ENCODE measurements at regions of chr17 and their contacts with region 1.

Region 1: DNA sequence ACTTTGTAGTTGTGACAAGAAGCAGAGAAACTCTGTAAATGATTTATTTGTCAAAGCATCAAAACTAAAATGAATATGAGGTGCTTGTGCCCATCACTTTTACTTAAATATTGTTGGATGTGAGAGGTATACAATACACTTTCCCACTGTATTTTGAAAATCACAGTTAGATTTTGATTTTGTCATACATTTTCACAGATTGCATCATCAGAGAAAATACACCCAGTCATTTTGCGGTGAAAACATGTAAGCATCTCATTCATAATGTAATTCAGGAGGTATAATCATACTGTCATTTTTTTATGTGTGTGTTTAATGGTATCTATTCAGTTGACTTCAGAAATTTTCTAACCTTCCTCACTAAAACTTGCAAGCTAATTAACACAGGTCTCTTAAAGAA is 11.3 kb downstream of the ZNF207 start:
- DNase-seq: no peak
- ATAC-seq: no peak
- H3K4me3 ChIP-seq: no peak overlapping the region
- H3K27ac ChIP-seq: no peak overlapping the region
- H3K4me1 ChIP-seq: no peaks in the 10 kb centered on the region
- H3K27me3 ChIP-seq: no peaks in the 10 kb centered on the region
- CTCF ChIP-seq: no peak
- POLR2A ChIP-seq: no peak
- RAD21 ChIP-seq: no peak

Region 2: DNA sequence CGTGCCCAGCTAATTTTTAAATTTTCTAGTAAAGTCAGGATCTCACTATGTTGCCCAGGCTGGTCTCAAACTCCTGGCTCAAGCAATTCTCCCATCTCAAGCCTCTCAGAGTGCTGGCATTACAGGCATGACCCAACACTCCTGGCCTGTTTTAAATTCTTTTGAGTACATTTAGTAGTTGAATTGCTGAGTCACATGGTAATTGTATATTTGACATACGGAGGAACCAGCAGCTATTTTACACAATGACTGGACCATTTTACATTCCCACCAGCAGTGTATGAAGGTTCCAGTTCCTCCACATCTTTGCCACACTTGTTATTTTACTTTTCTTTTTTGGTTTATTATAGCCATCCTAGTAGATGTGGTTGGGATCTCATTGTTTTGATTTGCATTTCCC is 175.4 kb before region 1 on chr17:
- CTCF ChIA-PET with region 1: no interaction called
- POLR2A ChIA-PET with region 1: no interaction called
- dilution Hi-C with region 1: no loop called
- in situ Hi-C with region 1: no loop called
- intact Hi-C with region 1: no loop called
- DNase-seq: peak; percentile 55
- ATAC-seq: 0 out of 2 replicates have a peak, but pooled peaks have one; percentile 30
- H3K4me3 ChIP-seq: no peak overlapping the region
- H3K27ac ChIP-seq: no peak overlapping the region
- H3K4me1 ChIP-seq: peaks cover 8% of the 10 kb centered on the region
- H3K27me3 ChIP-seq: no peaks in the 10 kb centered on the region
- CTCF ChIP-seq: no peak
- POLR2A ChIP-seq: no peak
- RAD21 ChIP-seq: no peak

Region 3: GRCh38 chr17:32382526-32383223 is 21.4 kb after region 1 on chr17:
- CTCF ChIA-PET with region 1: no interaction called
- POLR2A ChIA-PET with region 1: no interaction called
- dilution Hi-C with region 1: no loop called
- in situ Hi-C with region 1: no loop called
- intact Hi-C with region 1: loop called (anchors 2 kb)
- DNase-seq: no peak
- ATAC-seq: no peak
- H3K4me3 ChIP-seq: no peak overlapping the region
- H3K27ac ChIP-seq: no peak overlapping the region
- H3K4me1 ChIP-seq: no peaks in the 10 kb centered on the region
- H3K27me3 ChIP-seq: no peaks in the 10 kb centered on the region
- CTCF ChIP-seq: no peak
- POLR2A ChIP-seq: no peak
- RAD21 ChIP-seq: no peak

Measured in IMR-90 (cell line).